Right ventricle myocardium superior (tissue), 1 donor: ENCODE measurements at regions of chr7 and their contacts with region 1.

Region 1: GRCh38 chr7:92447345-92448204 is at the start of gene GATAD1:
- DNase-seq: peak; percentile 93
- ATAC-seq: peak; percentile 99
- total RNA-seq, gene GATAD1: 11.2 TPM

Region 2: GRCh38 chr7:91668217-91668616 is 779.4 kb before region 1 on chr7:
- intact Hi-C with region 1: no loop called
- DNase-seq: no peak
- ATAC-seq: no peak

Region 3: DNA sequence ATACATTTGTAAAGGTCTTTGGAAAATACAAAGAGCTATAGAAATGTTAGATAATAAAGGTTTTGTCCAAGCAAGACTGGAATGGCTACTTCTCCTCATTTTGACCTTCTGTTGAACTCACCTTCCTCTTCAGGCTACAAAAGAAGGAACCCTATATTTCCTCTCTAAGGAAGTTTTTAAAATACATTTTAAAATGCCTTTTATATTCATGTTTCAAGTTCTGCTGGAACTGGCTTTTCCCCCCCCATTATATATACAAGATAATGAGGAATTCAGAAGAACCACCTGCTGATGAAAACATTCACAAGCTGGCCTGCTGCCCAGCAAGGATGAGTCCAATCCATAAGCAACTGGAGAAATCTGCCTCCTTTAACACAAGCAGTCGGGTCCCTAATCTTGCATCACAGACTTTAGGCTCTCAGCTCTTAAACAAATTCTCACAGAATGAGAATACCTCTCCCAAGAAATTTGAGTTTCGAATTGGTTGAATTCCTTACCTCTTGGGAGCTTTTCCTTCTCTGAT is 611.7 kb before region 1 on chr7:
- intact Hi-C with region 1: loop called (anchors 10 kb)
- DNase-seq: no peak
- ATAC-seq: no peak

Region 4: DNA sequence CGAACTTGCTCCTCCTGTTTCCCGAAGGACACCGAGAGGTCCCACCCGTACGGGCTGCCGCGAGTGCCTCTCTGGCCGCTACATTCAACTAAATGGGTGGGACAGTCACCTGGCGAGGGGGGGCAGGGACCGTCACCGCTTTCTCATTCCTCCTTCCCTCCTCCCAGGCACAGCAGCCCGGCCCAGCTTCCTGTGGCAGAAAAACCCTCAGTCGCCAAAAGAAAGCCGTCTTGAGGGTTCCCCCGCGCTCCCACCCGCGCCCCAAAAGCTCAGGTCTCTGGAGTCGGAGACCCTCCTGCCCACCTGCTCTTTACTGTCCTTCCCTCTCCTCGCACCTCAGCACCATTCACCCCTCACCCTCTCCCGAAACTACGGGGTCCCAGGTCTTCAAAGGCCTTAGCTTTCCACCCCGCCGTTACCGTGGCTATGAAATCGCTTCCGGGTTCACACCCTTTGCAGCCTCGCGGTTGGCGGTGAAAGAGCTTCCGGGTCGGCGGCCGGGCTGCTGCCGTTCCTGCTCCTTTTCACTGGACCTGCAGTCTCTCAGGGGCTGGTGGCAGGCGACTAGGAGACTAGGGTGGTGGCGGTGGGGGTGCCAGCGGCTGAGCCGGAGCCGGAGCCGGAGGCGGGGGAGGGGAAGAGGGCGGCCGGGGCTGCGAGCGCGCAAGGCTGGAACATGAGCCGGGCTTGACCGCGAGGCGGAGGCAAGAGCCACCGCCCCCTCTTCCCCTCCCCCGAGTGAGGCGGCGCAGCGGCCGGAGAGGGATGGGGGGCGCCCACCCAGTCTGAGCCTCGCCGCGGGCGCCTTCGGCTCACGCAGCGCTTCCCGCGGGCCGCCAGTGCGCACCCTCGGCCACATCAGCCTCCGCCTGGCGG is 201.8 kb before region 1 on chr7 and contains the starts of genes ANKIB1 and KRIT1:
- intact Hi-C with region 1: loop called (anchors 2 kb)
- DNase-seq: peak; percentile 91
- ATAC-seq: peak; percentile 97
- total RNA-seq, gene ANKIB1: 37.3 TPM
- total RNA-seq, gene KRIT1: 26.4 TPM